Activated CD8-positive, alpha-beta T cell treated with anti-CD3 and anti-CD28 coated beads for 36 hours (primary cell): ENCODE measurements at regions of chrX and their contacts with region 1.

Region 1: DNA sequence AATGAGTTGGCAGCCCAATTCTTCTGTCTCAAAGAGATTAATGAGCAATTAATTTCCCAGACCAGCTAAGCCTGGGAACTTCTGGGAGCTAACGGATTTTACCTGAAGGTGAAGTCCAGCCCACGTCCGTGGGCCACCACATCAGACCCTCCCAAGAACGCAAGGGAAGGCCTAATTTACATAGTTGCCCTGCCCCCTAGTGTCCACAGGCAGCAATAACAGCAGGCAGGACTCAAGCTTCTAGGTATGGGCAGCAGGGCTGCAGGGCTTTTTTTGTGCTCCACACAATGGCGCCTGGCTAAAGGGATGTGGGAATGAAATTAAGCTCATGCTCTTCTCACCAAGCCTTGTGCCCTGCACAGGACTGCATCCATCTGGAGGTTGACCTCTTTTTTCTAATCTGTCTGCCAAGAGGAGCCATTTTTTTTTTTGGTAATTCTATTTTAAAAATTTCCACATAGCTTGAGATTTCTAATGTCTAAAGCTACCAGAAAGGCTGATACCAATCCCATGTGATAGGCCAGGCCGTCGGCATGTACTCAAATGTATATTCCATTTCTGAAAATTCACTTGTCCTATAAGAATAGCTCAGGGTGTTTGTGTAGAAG is 111.9 kb upstream of the TMEM164 start:
- DNase-seq: peak; percentile 59
- ATAC-seq: peak; percentile 74
- H3K4me3 Mint-ChIP-seq: no peak overlapping the region
- H3K27ac Mint-ChIP-seq: no peak overlapping the region
- H3K4me1 Mint-ChIP-seq: no peaks in the 10 kb centered on the region
- H3K27me3 Mint-ChIP-seq: no peaks in the 10 kb centered on the region
- CTCF ChIP-seq: peak; percentile 73

Region 2: GRCh38 chrX:109485470-109486340 is 405.3 kb before region 1 on chrX:
- CTCF ChIA-PET with region 1: interaction called, 29 read pairs
- POLR2A ChIA-PET with region 1: no interaction called
- intact Hi-C with region 1: loop called (anchors 2 kb)
- DNase-seq: peak; percentile 73
- ATAC-seq: peak; percentile 73
- H3K4me3 Mint-ChIP-seq: no peak overlapping the region
- H3K27ac Mint-ChIP-seq: no peak overlapping the region
- H3K4me1 Mint-ChIP-seq: no peaks in the 10 kb centered on the region
- H3K27me3 Mint-ChIP-seq: peaks cover 2% of the 10 kb centered on the region
- CTCF ChIP-seq: peak; percentile 86

Region 3: GRCh38 chrX:109714340-109714958 is 176.6 kb before region 1 on chrX:
- CTCF ChIA-PET with region 1: interaction called, 33 read pairs
- POLR2A ChIA-PET with region 1: no interaction called
- intact Hi-C with region 1: no loop called
- DNase-seq: no peak
- ATAC-seq: no peak
- H3K4me3 Mint-ChIP-seq: no peak overlapping the region
- H3K27ac Mint-ChIP-seq: no peak overlapping the region
- H3K4me1 Mint-ChIP-seq: peaks cover 49% of the 10 kb centered on the region
- H3K27me3 Mint-ChIP-seq: no peaks in the 10 kb centered on the region
- CTCF ChIP-seq: no peak

Region 4: GRCh38 chrX:109872021-109872732 is 18.8 kb before region 1 on chrX:
- CTCF ChIA-PET with region 1: interaction called, 13 read pairs
- POLR2A ChIA-PET with region 1: no interaction called
- intact Hi-C with region 1: no loop called
- DNase-seq: no peak
- ATAC-seq: no peak
- H3K4me3 Mint-ChIP-seq: no peak overlapping the region
- H3K27ac Mint-ChIP-seq: no peak overlapping the region
- H3K4me1 Mint-ChIP-seq: no peaks in the 10 kb centered on the region
- H3K27me3 Mint-ChIP-seq: no peaks in the 10 kb centered on the region
- CTCF ChIP-seq: no peak

Region 5: DNA sequence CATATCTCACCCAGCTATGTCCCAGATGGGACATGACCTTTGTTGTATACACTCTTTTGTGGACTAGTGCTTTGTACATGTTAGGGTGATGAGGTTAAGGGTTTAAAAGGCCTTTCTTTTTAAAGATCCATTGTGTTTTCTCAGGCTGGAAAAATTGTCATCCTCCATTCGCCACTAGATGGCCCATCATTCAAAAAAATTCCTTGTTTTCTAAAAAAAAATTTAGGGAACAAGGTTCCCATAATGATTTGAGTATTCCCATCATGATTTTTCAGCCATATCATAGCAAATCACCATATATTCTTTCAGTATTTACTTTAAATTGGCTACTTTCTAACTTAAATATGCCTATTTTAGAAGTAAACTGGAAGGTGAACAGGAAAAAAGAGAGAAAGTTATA is 20.0 kb after region 1 on chrX:
- CTCF ChIA-PET with region 1: interaction called, 11 read pairs
- POLR2A ChIA-PET with region 1: no interaction called
- intact Hi-C with region 1: no loop called
- DNase-seq: no peak
- ATAC-seq: no peak
- H3K4me3 Mint-ChIP-seq: no peak overlapping the region
- H3K27ac Mint-ChIP-seq: no peak overlapping the region
- H3K4me1 Mint-ChIP-seq: no peaks in the 10 kb centered on the region
- H3K27me3 Mint-ChIP-seq: no peaks in the 10 kb centered on the region
- CTCF ChIP-seq: no peak